Naive thymus-derived CD8-positive, alpha-beta T cell (primary cell): ENCODE measurements at regions of chr3 and their contacts with region 1.

Region 1: GRCh38 chr3:42012935-42013690 is 51.2 kb upstream of the ULK4 start:
- DNase-seq: peak; percentile 46 to 78 (median 65)
- ATAC-seq: peak; percentile 69 to 73
- H3K4me3 Mint-ChIP-seq: peak overlapping the region; percentile 82 to 95 (median 91)
- H3K27ac Mint-ChIP-seq: peak overlapping the region; percentile 85 to 98 (median 97)
- H3K4me1 Mint-ChIP-seq: peaks cover 16 to 48% (median 38%) of the 10 kb centered on the region in 4 donors
- H3K27me3 Mint-ChIP-seq: no peaks in the 10 kb centered on the region

Region 2: GRCh38 chr3:41961750-41962679 is 51.1 kb before region 1 on chr3 and contains the start of gene ULK4:
- POLR2A ChIA-PET with region 1: interaction called, 14 read pairs
- DNase-seq: peak; percentile 79 to 97 (median 94)
- ATAC-seq: peak; percentile 86 to 87
- H3K4me3 Mint-ChIP-seq: peak within 1 kb of the TSS; percentile 97 to 100 (median 100)
- H3K27ac Mint-ChIP-seq: peak within 1 kb of the TSS; percentile 92 to 99 (median 98)
- H3K4me1 Mint-ChIP-seq: peaks cover 13 to 24% (median 17%) of the 10 kb centered on the region in 4 donors
- H3K27me3 Mint-ChIP-seq: no peaks in the 10 kb centered on the region
- polyA plus RNA-seq, gene ULK4: 6.6 to 10.7 (median 9.8) TPM

Region 3: DNA sequence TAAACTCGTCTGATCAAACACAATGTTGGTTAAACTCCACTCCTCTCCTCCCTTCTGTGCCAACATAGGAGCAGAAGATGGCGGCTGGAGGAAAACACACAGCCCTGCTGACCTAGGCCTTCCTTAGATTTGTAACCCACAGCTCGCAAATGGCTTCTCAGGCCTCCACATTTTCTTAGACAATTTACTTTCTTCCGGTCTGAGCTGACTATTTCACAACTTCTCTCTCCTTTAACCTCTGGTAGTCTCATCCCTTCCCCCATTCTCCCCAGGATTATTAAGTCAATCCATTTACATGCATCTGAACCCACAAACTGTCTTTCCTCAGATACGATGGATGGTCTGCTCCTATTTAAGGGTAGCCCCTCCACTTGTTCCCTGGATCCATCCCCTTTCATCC is 25.5 kb before region 1 on chr3:
- POLR2A ChIA-PET with region 1: no interaction called
- DNase-seq: no peak
- ATAC-seq: no peak
- H3K4me3 Mint-ChIP-seq: no peak overlapping the region
- H3K27ac Mint-ChIP-seq: no peak overlapping the region
- H3K4me1 Mint-ChIP-seq: peaks cover 0 to 3% (median 0%) of the 10 kb centered on the region in 4 donors
- H3K27me3 Mint-ChIP-seq: peaks cover 0 to 3% (median 0%) of the 10 kb centered on the region in 5 donors

Region 4: DNA sequence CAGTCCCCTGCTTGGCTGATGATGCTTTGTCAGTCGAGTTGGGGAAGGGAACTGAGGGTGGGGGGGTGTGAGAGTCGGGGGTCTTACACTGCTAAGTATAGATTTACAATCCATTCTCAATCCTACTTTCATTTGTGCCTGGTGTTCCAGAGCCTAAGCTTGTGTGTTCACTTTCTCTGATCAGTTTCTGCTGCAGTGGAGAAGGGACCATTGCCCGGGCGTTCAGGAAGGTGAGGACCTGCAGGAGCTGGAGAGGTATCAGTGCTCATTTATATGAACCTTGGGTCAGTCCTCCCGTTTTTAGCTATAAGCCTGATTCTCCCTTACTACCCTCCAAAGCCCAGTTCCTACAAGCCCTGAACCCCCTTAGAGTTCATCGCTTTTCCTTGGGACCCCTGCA is 37.0 kb after region 1 on chr3:
- POLR2A ChIA-PET with region 1: no interaction called
- DNase-seq: no peak
- ATAC-seq: no peak
- H3K4me3 Mint-ChIP-seq: no peak overlapping the region
- H3K27ac Mint-ChIP-seq: no peak overlapping the region
- H3K4me1 Mint-ChIP-seq: peaks cover 20 to 70% (median 38%) of the 10 kb centered on the region in 4 donors
- H3K27me3 Mint-ChIP-seq: no peaks in the 10 kb centered on the region